Calu3 (cell line): ENCODE measurements at regions of chr2 and their contacts with region 1.

Region 1: GRCh38 chr2:180980106-180980942 is at the start of gene UBE2E3:
- DNase-seq: peak; percentile 86
- H3K4me3 Mint-ChIP-seq: peak within 1 kb of the TSS; percentile 86
- H3K27ac Mint-ChIP-seq: peak within 1 kb of the TSS; percentile 90
- H3K4me1 Mint-ChIP-seq: peaks cover 39% of the 10 kb centered on the region
- H3K27me3 Mint-ChIP-seq: no peaks in the 10 kb centered on the region
- CTCF ChIP-seq: peak; percentile 80
- total RNA-seq, gene UBE2E3: 57.8 and 64.3 TPM in 2 replicates

Region 2: GRCh38 chr2:180240774-180241173 is 739.5 kb before region 1 on chr2:
- CTCF ChIA-PET with region 1: no interaction called
- intact Hi-C with region 1: loop called (anchors 2 kb)
- DNase-seq: peak; percentile 21
- H3K4me3 Mint-ChIP-seq: no peak overlapping the region
- H3K27ac Mint-ChIP-seq: no peak overlapping the region
- H3K4me1 Mint-ChIP-seq: peaks cover 8% of the 10 kb centered on the region
- H3K27me3 Mint-ChIP-seq: no peaks in the 10 kb centered on the region
- CTCF ChIP-seq: peak; percentile 45

Region 3: GRCh38 chr2:180520206-180520605 is 460.1 kb before region 1 on chr2:
- CTCF ChIA-PET with region 1: interaction called, 25 read pairs
- intact Hi-C with region 1: loop called (anchors 2 kb)
- DNase-seq: peak; percentile 32
- H3K4me3 Mint-ChIP-seq: no peak overlapping the region
- H3K27ac Mint-ChIP-seq: no peak overlapping the region
- H3K4me1 Mint-ChIP-seq: peaks cover 93% of the 10 kb centered on the region
- H3K27me3 Mint-ChIP-seq: no peaks in the 10 kb centered on the region
- CTCF ChIP-seq: no peak

Region 4: GRCh38 chr2:180644709-180645108 is 335.6 kb before region 1 on chr2:
- CTCF ChIA-PET with region 1: interaction called, 3 read pairs
- intact Hi-C with region 1: loop called (anchors 5 kb)
- DNase-seq: peak; percentile 58
- H3K4me3 Mint-ChIP-seq: no peak overlapping the region
- H3K27ac Mint-ChIP-seq: no peak overlapping the region
- H3K4me1 Mint-ChIP-seq: peaks cover 12% of the 10 kb centered on the region
- H3K27me3 Mint-ChIP-seq: no peaks in the 10 kb centered on the region
- CTCF ChIP-seq: no peak

Region 5: DNA sequence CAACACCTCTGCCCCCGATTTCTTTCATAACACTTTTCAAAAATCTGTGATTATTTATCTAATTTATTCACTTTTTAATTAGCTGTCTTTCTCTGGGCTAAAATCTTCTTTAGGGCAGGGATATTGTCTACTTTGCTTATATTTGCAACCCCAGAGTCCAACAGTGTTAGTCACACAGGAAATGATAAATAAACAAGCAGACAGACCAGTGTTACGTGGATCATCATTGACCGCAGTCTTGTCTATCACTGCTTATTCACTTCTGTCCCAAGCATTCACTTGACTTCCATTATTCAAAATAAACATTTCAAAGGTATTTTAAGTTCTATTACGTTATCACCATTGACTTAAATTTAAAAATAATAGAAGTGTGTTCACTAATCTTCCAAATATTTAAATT is 237.5 kb before region 1 on chr2:
- CTCF ChIA-PET with region 1: no interaction called
- intact Hi-C with region 1: loop called (anchors 10 kb)
- DNase-seq: no peak
- H3K4me3 Mint-ChIP-seq: no peak overlapping the region
- H3K27ac Mint-ChIP-seq: no peak overlapping the region
- H3K4me1 Mint-ChIP-seq: peaks cover 25% of the 10 kb centered on the region
- H3K27me3 Mint-ChIP-seq: no peaks in the 10 kb centered on the region
- CTCF ChIP-seq: no peak

Region 6: DNA sequence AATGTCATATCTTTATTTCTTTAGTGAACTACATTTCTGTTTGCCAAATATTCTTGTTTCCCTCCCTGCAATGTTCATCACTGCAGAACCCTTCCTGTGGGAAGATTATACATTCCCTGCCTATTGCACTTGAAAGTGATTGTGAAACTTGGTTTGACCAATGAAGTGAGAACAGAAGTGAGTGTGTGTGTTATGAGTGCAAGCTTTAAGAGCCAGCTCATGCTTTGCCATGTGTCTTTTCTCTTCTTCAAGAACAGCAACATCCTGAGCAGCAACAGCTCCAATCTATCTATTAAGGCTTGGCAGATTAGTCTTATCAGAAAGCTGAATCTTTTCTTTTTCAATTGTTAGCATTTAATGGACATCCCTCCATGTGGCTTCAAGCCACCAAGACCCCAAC is 41.9 kb before region 1 on chr2:
- CTCF ChIA-PET with region 1: no interaction called
- intact Hi-C with region 1: no loop called
- DNase-seq: no peak
- H3K4me3 Mint-ChIP-seq: no peak overlapping the region
- H3K27ac Mint-ChIP-seq: no peak overlapping the region
- H3K4me1 Mint-ChIP-seq: peaks cover 16% of the 10 kb centered on the region
- H3K27me3 Mint-ChIP-seq: no peaks in the 10 kb centered on the region
- CTCF ChIP-seq: no peak